Head of caudate nucleus (tissue), 42 donors: ENCODE measurements at regions of chr10 and their contacts with region 1.

Region 1: DNA sequence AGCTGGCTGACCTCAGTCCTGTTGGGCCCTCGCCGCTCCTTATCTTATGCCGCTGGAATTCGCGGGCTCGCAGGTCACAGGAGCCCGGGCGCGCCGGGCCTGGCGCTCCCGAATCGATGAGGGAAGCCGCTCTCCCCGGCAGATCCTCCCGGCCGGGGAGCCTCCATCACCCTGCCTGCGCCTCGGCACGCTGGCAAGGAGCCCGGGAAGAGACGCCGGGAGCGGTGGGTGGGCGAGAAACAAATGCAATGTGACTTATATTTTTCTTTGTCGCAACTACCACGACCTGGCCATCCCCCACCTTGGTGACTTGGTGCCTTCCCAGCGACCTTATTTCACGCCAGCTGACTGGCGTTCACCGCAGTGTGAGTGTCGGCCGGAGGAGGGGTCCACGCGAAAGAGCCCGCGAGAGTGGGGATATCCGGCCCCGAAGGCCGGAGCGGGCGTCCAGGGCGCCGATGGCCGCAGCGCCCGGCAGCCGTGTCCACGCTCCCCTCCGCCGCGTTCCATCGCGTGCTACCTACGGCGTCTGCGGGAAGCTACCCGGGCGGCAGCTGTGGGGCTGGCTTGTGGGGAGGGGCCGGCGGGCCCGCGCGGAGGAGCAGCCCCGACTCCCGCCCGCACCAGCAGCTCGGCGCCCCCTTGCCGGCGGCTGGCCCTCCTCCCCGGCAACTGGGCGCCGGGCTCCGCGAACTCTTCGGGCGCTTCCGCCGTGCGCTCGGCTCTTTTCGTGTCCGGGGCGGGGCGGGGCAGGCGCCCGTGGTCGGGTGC is 494 bp upstream of the BMPR1A start:
- DNase-seq: peak; percentile 51 to 97 (median 92)

Region 2: DNA sequence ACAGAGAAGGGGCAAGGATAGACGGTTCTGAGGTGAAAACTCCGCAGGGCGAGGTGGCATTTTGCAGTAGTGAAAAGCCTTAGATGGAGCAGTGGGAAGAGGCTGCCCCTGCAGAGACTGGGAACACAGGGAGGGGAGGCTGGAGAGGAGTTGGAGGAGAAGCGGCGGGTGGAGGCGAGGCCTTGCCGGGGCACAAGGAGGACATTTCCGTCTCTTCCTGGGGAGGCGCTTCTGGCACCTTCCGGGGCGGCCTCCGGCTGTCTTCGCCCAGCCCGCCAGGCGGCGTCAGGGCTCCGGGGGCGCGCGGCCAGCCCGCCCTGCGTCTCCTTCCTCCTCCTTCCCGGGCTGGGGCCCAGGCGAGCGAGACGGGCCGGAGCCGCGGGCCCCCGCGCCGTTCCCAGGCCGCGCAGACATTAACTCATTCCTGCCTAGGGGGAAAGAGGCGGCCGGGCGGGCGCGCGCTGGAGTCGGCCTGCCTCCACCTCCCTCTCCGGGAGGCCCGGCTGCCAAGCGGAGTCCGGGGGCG is 44.9 kb before region 1 on chr10:
- intact Hi-C with region 1: loop called (anchors 5 kb)
- DNase-seq: peak; percentile 55 to 94 (median 86)

Region 3: DNA sequence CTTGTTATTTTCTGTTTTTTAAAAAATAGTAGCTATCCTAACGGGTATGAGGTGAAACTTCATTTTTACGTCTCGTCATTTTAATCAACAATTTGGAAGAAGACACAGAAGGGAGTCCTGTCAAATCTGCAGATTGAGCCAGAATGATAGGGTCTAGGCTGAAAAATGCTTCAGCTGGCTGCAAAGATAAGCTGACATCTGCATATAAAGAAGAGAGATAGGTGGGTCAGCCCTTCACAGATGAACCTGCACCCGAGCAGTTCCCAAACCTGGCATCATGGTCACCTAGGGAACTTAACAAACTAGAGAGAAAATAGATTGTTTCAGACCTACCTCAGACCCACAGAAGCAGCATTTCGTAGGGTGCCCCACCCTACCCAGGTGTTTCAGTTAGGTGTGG is 34.7 kb before region 1 on chr10:
- intact Hi-C with region 1: no loop called
- DNase-seq: no peak